ENCODE measurements at regions of chrX and their contacts with region 1.

Region 1: DNA sequence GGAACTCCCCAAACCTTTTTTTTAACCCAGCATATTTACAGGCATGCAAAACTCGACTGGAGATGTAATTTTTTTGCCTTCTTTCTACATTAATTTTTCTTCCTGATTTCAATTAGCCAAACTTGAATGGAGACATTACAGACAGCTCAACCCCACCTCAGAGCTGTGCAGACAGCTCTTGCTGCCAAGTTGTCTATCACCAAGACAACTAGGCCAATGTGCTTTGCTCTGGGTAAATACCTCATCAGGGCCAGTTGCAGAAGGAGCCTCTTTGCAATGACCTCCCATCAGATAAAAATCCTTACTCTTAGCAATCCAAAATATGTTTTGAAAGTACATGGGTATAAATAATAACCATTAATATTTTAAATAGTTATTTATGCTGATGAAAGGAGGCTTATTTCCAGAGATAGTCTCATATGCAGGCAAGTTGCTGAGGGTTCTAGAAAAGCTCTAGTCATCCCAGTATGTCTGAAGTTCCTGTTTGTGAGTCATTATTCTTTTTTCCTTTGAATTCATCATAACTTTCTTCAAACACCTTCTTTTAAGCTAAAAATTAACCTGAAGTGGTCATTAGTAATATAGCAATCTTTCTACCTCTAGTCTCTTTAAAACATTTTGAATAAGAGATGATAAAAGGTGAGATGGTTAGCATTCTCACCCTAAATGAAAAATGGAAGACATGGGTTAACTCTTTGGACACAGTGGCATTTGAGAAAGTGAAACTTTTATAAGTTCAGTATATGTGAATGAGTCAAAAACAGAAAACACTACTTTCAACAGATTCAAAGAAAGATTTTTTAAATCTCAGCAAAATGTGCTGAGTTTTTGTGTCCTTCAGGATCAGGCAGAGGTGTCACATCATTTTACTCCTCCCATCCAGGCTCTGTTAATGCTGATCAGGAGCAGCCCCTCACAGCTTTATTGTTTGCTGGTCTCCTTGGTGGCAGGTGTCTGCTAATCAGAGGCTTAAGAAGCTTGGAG is 475.5 kb upstream of the FGF16 start:
- DNase-seq: no peak
- H3K4me3 Mint-ChIP-seq: no peak overlapping the region
- H3K27ac Mint-ChIP-seq: no peak overlapping the region
- H3K4me1 Mint-ChIP-seq: no peaks in the 10 kb centered on the region
- H3K27me3 Mint-ChIP-seq: no peaks in the 10 kb centered on the region

Region 2: DNA sequence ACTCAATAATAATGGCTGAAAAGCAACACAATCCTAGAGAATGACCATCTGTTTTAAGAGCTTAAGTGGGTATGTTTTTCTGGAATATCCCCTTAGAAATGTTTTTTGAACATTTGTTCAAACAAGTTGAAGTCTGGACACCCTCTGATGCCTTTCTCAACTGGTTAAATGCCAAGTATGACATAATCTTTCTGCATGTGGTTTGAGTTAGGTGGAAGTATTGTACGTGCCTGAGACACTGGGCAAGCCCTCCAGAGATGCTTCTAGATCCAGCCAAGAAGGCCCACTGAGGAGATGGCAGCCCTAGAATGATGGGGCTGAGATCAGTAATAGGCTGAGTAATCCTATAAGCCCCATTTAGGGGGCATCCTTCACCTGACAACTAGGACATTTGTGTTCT is 51.1 kb before region 1 on chrX:
- intact Hi-C with region 1: no loop called
- DNase-seq: no peak
- H3K4me3 Mint-ChIP-seq: no peak overlapping the region
- H3K27ac Mint-ChIP-seq: no peak overlapping the region
- H3K4me1 Mint-ChIP-seq: no peaks in the 10 kb centered on the region
- H3K27me3 Mint-ChIP-seq: no peaks in the 10 kb centered on the region

Region 3: DNA sequence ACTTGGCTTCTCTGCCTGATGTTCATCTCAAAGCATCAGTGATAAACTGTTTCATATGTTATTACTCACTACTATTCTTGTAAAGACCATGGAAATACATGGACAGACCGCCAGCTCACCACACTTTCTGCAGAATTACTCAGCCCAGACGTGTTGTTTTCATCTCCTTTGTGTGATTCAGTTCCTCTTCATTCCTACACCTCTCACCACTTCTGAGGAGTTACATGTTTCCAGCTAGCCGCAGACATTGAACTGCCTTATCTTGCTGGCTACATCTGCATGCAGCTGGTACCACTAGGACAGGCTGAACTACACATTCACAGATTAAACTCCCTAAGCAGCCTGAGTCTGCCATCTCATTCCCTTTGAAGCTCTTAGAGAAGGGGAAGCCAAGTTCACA is 32.3 kb after region 1 on chrX:
- intact Hi-C with region 1: loop called (anchors 1 kb)
- DNase-seq: peak; percentile 9
- H3K4me3 Mint-ChIP-seq: no peak overlapping the region
- H3K27ac Mint-ChIP-seq: peak overlapping the region; percentile 65
- H3K4me1 Mint-ChIP-seq: peaks cover 14% of the 10 kb centered on the region
- H3K27me3 Mint-ChIP-seq: no peaks in the 10 kb centered on the region

Region 4: GRCh38 chrX:77070202-77070918 is 98.7 kb after region 1 on chrX:
- intact Hi-C with region 1: no loop called
- DNase-seq: no peak
- H3K4me3 Mint-ChIP-seq: peak overlapping the region; percentile 45
- H3K27ac Mint-ChIP-seq: no peak overlapping the region
- H3K4me1 Mint-ChIP-seq: peaks cover 8% of the 10 kb centered on the region
- H3K27me3 Mint-ChIP-seq: no peaks in the 10 kb centered on the region

Measured in activated T-helper 2 cell treated with anti-CD3 and anti-CD28 coated beads, Interferon-gamma antibody, Interleukin-2, Interleukin-4, amounts not matched to agents 10 μg/mL and 5 μg/mL and 100 μg/mL, durations not matched to agents 14 hours and 24 hours and 36 hours (primary cell).